ENCODE measurements at regions of chr5 and their contacts with region 1.

Region 1: DNA sequence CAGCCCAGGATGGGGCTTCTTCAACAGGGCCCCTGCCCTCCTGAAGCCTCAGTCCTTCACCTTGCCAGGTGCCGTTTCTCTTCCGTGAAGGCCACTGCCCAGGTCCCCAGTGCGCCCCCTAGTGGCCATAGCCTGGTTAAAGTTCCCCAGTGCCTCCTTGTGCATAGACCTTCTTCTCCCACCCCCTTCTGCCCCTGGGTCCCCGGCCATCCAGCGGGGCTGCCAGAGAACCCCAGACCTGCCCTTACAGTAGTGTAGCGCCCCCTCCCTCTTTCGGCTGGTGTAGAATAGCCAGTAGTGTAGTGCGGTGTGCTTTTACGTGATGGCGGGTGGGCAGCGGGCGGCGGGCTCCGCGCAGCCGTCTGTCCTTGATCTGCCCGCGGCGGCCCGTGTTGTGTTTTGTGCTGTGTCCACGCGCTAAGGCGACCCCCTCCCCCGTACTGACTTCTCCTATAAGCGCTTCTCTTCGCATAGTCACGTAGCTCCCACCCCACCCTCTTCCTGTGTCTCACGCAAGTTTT is 23.6 kb downstream of the PCDHGC5 start:
- DNase-seq: no peak
- H3K4me3 ChIP-seq: peak overlapping the region; percentile 39
- H3K27me3 ChIP-seq: no peaks in the 10 kb centered on the region
- CTCF ChIP-seq: peak; percentile 90

Region 2: GRCh38 chr5:141475625-141476131 is 36.8 kb before region 1 on chr5 and contains the start of gene PCDHGC3:
- CTCF ChIA-PET with region 1: interaction called, 33 read pairs
- POLR2A ChIA-PET with region 1: no interaction called
- DNase-seq: peak; percentile 64
- H3K4me3 ChIP-seq: peak within 1 kb of the TSS; percentile 53
- H3K27me3 ChIP-seq: no peaks in the 10 kb centered on the region
- CTCF ChIP-seq: 0 out of 2 replicates have a peak, but pooled peaks have one; percentile 12
- polyA plus RNA-seq, gene PCDHGC3: 36.5 and 56.3 TPM in 2 replicates

Region 3: DNA sequence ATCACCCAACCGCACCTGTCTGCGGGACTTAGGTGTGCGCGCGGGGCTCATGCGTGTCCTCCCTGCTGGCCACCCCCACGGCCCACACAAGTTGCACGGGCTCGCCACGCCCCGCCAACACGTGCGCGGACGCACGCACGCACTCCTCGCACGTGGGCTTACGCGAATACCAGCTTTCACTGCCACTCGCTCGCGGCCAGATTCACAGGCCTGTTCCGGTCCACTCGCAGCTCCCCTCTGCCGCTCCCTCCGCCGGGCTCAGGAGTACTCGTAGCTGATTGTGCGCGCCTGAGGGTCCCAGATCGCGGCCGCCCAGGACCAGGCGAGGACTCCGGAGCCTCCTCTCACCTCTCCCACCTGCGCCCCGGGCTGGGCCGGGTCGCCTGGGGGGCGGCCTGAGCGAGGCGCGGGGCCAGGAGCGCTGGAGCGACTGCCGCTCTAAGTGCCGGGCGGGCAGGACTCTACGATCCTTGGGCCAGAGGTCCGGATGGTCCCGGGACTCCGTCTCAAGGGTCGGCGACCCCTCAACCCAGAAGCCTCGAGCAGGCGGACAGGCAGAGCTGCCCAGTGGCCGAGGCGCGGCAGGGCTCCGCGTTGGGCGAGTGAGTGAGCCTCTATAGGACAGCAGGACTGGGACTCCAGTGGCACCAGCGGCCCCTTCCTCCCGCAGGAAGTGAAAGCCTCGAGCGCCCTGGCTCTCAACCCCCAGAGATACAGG is 20.1 kb before region 1 on chr5:
- CTCF ChIA-PET with region 1: interaction called, 11 read pairs
- POLR2A ChIA-PET with region 1: interaction called, 4 read pairs
- DNase-seq: no peak
- H3K4me3 ChIP-seq: no peak overlapping the region
- H3K27me3 ChIP-seq: no peaks in the 10 kb centered on the region
- CTCF ChIP-seq: no peak

Region 4: DNA sequence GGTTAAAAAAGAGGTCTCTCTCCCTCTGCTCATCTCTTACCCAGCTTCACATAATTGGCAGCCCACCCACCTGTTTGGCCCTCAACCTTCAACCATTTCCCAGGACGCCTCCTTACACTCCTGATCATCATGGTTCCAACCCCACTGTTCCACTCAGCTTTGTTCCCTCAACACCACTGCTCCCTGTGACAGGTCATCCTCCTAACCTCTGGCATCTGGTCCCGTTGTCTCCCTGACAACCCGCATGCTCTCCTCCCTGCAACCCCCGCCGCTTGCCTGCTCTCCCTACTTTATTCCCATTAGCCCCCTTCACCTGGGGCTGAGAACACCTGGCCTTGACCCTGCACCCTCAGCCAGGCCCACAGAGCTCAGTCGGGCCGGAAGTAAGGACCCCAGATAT is 10.7 kb before region 1 on chr5:
- CTCF ChIA-PET with region 1: interaction called, 10 read pairs
- POLR2A ChIA-PET with region 1: no interaction called
- DNase-seq: no peak
- H3K4me3 ChIP-seq: no peak overlapping the region
- H3K27me3 ChIP-seq: no peaks in the 10 kb centered on the region
- CTCF ChIP-seq: no peak

Region 5: GRCh38 chr5:141713616-141714309 is 201.3 kb after region 1 on chr5:
- CTCF ChIA-PET with region 1: no interaction called
- POLR2A ChIA-PET with region 1: no interaction called
- DNase-seq: no peak
- H3K4me3 ChIP-seq: no peak overlapping the region
- H3K27me3 ChIP-seq: peaks cover 15% of the 10 kb centered on the region
- CTCF ChIP-seq: no peak

Measured in BJ (cell line).